ENCODE measurements at regions of chr22 and their contacts with region 1.

Region 1: DNA sequence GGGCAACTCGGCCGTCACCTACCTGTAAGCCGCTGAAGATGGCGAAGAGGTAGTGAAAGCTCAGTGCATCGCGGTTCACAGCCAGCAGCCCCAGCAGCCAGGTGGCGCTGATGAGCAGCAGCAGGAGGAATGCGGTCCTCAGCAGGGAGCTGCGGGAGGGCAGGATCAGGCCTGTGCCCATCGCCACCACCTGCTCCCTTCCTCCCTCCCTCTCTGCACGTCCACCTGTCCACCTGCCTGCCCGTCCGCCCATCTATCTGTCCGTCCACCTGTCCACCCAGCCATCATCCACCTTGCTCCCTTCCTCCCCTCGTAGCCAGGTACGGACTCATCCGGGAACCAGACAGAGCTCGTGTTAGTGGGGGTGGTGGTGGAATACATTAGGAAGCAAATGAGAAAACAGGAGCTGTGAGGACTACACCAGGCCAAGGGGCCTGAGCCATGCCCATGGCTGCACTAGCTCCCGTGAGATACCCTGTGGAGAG is 32.2 kb downstream of the TRMU start:
- DNase-seq: no peak
- H3K4me3 ChIP-seq: no peak overlapping the region
- CTCF ChIP-seq: peak; percentile 97

Region 2: DNA sequence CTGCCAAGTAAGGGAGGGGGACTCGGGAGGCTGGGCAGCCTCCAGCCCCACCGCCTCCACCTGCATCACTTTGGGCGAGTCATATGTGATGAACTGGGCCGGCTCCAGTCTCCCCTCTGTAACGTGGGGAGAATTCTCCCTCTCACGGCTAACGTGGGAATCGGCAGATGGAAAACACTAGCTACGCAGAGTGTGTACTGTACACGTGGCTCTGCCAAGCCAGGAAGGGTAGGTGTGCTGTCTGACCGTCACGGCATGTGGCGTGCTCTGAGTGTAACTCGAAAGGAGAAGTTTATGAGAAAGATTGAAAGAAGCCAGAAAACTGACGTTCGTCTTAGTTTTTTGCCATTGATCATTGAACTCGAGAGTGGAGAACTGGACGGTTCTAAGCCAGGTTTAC is 18.5 kb before region 1 on chr22:
- CTCF ChIA-PET with region 1: interaction called, 16 read pairs
- POLR2A ChIA-PET with region 1: no interaction called
- DNase-seq: no peak
- H3K4me3 ChIP-seq: no peak overlapping the region
- CTCF ChIP-seq: no peak

Region 3: DNA sequence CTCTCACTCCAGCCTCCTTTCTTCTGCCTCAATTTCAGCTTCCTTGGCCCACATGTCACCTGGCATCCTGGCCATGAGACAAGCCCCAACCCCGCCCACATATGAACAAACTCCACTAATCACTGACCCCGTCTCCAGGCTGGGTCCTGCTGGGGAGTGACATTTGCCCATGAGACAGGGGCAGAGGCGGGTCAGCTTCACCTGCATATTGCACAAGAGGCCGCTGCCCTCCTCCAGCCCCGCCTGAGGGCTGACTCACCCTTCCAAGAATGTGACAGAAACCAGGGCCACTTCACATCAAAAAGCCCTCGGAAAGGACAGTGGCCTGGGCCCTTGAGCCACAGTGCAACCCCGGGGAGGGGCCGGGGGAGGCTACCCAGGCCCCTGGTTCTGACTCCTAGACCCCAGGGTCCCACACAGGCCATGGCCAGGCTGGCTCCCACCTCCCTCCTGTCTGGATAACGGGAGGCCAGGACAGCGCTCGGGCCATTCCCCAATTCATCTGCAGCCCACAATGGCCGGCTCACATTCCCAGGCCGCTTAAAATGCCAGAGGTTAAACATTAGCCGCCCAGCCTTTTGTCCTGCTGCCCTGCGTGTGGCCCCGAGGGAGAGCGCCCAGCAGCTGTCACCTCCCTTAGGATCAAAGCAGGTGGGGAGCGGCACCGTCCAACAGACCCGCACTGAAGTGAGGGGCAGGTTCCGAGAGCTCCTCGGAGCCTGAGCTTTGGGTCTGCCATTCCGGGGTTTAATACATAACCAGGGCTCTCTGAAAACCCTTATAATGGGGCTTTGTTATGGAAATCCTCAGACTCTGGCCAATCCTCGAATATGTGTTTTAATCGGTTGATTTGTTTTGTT is 10.0 kb after region 1 on chr22:
- CTCF ChIA-PET with region 1: interaction called, 36 read pairs
- POLR2A ChIA-PET with region 1: no interaction called
- DNase-seq: no peak
- H3K4me3 ChIP-seq: no peak overlapping the region
- CTCF ChIP-seq: no peak

Region 4: GRCh38 chr22:46465345-46465720 is 97.6 kb after region 1 on chr22:
- CTCF ChIA-PET with region 1: no interaction called
- POLR2A ChIA-PET with region 1: no interaction called
- DNase-seq: no peak
- H3K4me3 ChIP-seq: no peak overlapping the region
- CTCF ChIP-seq: no peak

Region 5: GRCh38 chr22:46511151-46512038 is 143.6 kb after region 1 on chr22:
- CTCF ChIA-PET with region 1: no interaction called
- POLR2A ChIA-PET with region 1: no interaction called
- DNase-seq: no peak
- H3K4me3 ChIP-seq: no peak overlapping the region
- CTCF ChIP-seq: no peak

Region 6: GRCh38 chr22:46528121-46528610 is 160.4 kb after region 1 on chr22:
- CTCF ChIA-PET with region 1: interaction called, 12 read pairs
- POLR2A ChIA-PET with region 1: interaction called, 3 read pairs
- DNase-seq: no peak
- H3K4me3 ChIP-seq: no peak overlapping the region
- CTCF ChIP-seq: no peak

Region 7: DNA sequence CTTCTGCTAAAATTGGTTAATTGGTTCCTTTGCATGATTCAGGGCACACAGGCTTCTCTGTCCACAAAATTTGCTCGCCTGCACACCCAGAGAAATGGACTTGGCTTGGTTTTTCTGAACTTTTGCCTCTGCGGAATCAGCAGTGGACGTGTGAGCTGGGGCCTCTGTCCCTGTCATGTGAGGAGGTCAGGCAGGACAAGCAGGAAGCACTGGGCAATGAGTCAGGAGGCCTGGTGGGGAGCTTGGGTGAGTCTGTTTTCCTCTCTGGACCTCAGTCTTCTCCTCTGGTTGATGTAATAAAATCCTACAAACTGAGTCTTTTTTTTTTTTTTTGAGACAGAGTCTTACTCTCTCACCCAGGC is 180.1 kb after region 1 on chr22:
- CTCF ChIA-PET with region 1: interaction called, 284 read pairs
- POLR2A ChIA-PET with region 1: no interaction called
- DNase-seq: peak; percentile 45
- H3K4me3 ChIP-seq: no peak overlapping the region
- CTCF ChIP-seq: no peak